Heart right ventricle (tissue), 16 donors: ENCODE measurements at regions of chr10 and their contacts with region 1.

Region 1: DNA sequence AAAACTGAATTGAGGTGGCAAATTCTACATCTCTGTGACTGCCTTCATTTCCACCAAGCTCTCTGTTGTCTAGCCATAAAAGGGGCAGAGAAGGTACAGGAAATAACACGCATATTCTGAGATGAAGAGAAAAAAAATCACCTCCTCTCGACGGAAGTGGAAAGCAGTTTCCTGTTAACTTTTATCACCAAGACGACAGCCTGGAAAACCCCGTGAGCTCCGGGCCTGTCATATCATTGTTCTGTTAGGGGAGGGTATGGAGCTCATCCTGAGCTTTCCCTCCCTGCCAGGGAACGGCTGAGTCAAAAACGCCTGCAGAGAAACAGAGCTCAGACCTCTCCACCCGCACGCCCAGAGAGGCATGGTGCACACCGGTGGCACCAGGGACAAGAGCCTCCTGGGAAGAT is 200.3 kb downstream of the PRPF18 start:
- DNase-seq: peak in 1 of 2 donors; percentile 46
- ATAC-seq: peak in 7 of 8 donors; percentile 22 to 69 (median 54)
- H3K4me3 ChIP-seq: no peak overlapping the region
- H3K27ac ChIP-seq: peak overlapping the region in 8 of 10 donors; percentile 16 to 82 (median 68)
- H3K4me1 ChIP-seq: peaks cover 12 to 51% (median 36%) of the 10 kb centered on the region in 9 donors
- H3K27me3 ChIP-seq: no peaks in the 10 kb centered on the region
- CTCF ChIP-seq: no peak

Region 2: GRCh38 chr10:13891128-13892000 is 104.3 kb after region 1 on chr10:
- intact Hi-C with region 1: loop called in 3 of 10 experiments (anchors 5 kb)
- DNase-seq: peak in 1 of 2 donors; percentile 47
- ATAC-seq: peak; percentile 43 to 71 (median 64)
- H3K4me3 ChIP-seq: peak overlapping the region; percentile 36 to 75 (median 65)
- H3K27ac ChIP-seq: peak overlapping the region; percentile 58 to 91 (median 82)
- H3K4me1 ChIP-seq: peaks cover 0 to 54% (median 21%) of the 10 kb centered on the region in 9 donors
- H3K27me3 ChIP-seq: peaks cover 0 to 43% (median 0%) of the 10 kb centered on the region in 7 donors
- CTCF ChIP-seq: no peak

Region 3: GRCh38 chr10:13990946-13991345 is 203.9 kb after region 1 on chr10:
- intact Hi-C with region 1: loop called in 3 of 10 experiments (anchors 5 to 10 kb)
- DNase-seq: peak; percentile 31 to 58
- ATAC-seq: peak in 7 of 8 donors; percentile 20 to 71 (median 63)
- H3K4me3 ChIP-seq: peak overlapping the region in 6 of 10 donors; percentile 3 to 34 (median 20)
- H3K27ac ChIP-seq: peak overlapping the region; percentile 46 to 93 (median 78)
- H3K4me1 ChIP-seq: peaks cover 6 to 65% (median 51%) of the 10 kb centered on the region in 9 donors
- H3K27me3 ChIP-seq: no peaks in the 10 kb centered on the region
- CTCF ChIP-seq: no peak

Region 4: DNA sequence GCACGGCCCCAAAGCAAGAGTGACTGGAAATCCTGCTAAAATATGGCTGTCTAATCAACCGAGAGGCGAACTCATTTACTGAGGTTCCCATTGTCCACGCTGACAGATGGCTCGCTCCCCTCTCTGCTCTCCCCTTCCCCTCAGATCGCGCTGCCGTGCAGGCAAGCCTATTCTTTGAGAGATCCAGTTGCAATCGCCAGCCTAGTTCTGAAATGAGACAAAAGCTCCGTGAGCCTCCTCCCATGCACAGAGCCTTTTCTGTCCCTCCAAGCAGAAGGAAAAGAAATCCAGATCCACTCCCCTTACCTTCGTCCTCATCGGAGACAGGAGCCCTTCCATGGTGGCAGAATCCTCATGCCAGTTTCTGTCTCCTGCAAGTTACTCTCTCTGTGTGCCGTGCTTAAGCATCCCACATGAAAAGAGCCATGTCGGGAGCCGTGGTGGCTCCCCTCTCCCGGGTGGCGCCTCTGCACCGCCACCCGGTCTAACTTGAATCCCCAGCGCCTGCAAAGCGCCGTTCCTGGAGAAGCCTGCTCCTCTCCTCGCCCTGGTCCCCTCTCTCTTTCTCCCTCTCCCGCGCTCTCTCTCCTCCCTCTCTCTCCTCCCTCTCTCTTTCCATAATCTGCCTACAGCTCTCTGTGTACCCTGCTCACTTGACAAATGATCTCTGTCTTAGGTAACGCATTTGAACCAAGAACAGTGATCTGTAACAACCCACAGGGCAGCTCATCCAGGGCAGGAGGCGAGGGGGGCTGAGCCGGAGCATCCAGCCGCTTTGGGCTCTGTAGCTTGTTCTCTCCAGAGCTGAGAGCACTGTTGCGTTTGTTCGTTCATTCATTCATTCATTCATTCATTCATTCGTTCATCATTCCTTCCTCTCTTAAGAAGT is 386.9 kb after region 1 on chr10:
- intact Hi-C with region 1: loop called in 1 of 10 experiments (anchors 10 kb)
- DNase-seq: no peak
- ATAC-seq: peak in 5 of 8 donors; percentile 22 to 57 (median 46)
- H3K4me3 ChIP-seq: peak overlapping the region in 9 of 10 donors; percentile 16 to 52 (median 48)
- H3K27ac ChIP-seq: no peak overlapping the region
- H3K4me1 ChIP-seq: peaks cover 0 to 15% (median 12%) of the 10 kb centered on the region in 9 donors
- H3K27me3 ChIP-seq: peaks cover 0 to 91% (median 57%) of the 10 kb centered on the region in 7 donors
- CTCF ChIP-seq: no peak

Region 5: GRCh38 chr10:14191871-14192270 is 404.9 kb after region 1 on chr10:
- intact Hi-C with region 1: loop called in 3 of 10 experiments (anchors 10 kb)
- DNase-seq: no peak
- ATAC-seq: no peak
- H3K4me3 ChIP-seq: no peak overlapping the region
- H3K27ac ChIP-seq: no peak overlapping the region
- H3K4me1 ChIP-seq: no peaks in the 10 kb centered on the region
- H3K27me3 ChIP-seq: peaks cover 0 to 41% (median 13%) of the 10 kb centered on the region in 7 donors
- CTCF ChIP-seq: no peak

Region 6: DNA sequence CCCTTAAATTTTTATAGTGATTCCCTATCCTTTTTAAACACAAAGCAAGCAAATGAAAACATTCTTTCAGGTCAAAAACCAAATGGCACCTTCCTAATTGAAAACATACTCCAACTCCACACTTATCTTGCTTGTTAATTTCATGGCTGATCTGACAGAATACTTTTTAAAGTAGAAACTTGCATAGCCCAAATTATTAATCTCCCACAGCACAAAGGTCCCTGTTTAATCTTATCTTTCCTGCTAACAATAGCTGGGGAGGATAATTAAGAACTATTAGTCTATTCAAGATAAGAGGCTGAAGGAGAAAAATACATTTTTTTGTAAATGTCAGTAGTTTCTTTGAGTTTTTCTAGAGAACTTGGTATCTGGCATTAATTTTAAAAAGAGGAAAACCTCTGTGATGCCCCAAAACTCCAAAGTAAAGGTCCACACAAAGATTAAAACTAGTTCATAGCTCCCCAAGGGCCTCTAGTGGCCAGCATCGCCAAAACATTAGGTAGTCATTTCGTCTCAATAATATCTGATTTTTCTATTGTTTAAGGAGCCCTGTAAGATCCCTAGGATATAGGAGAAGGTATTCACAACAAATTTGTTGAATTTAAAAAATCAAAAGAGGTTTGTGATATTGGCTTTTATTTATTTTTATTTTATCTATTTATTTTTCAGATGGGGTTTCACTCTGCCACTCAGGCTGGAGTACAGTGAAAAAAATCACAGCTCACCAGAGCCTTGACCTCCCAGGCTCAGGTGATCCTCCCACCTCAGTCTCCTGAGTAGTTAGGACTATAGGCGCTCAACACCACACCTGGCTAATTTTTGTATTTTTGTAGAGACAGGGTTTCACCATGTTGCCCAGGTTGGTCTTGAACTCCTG is 1036.1 kb after region 1 on chr10:
- intact Hi-C with region 1: loop called in 1 of 10 experiments (anchors 10 kb)
- DNase-seq: peak in 1 of 2 donors; percentile 23
- ATAC-seq: peak in 3 of 8 donors; percentile 49 to 51 (median 49)
- H3K4me3 ChIP-seq: no peak overlapping the region
- H3K27ac ChIP-seq: no peak overlapping the region
- H3K4me1 ChIP-seq: peaks cover 0 to 8% (median 0%) of the 10 kb centered on the region in 9 donors
- H3K27me3 ChIP-seq: no peaks in the 10 kb centered on the region
- CTCF ChIP-seq: peak; percentile 22 to 77 (median 66)